ENCODE measurements at regions of chr11 and their contacts with region 1.

Region 1: GRCh38 chr11:94623120-94623735 is 56.1 kb downstream of the PIWIL4 start:
- DNase-seq: peak; percentile 35
- H3K4me3 ChIP-seq: no peak overlapping the region
- H3K27ac ChIP-seq: no peak overlapping the region
- H3K4me1 ChIP-seq: no peaks in the 10 kb centered on the region
- H3K27me3 ChIP-seq: no peaks in the 10 kb centered on the region
- CTCF ChIP-seq: peak; percentile 53

Region 2: GRCh38 chr11:94762208-94762607 is 139.0 kb after region 1 on chr11:
- intact Hi-C with region 1: loop called (anchors 5 kb)
- DNase-seq: no peak
- H3K4me3 ChIP-seq: no peak overlapping the region
- H3K27ac ChIP-seq: no peak overlapping the region
- H3K4me1 ChIP-seq: no peaks in the 10 kb centered on the region
- H3K27me3 ChIP-seq: peaks cover 2% of the 10 kb centered on the region
- CTCF ChIP-seq: no peak

Region 3: DNA sequence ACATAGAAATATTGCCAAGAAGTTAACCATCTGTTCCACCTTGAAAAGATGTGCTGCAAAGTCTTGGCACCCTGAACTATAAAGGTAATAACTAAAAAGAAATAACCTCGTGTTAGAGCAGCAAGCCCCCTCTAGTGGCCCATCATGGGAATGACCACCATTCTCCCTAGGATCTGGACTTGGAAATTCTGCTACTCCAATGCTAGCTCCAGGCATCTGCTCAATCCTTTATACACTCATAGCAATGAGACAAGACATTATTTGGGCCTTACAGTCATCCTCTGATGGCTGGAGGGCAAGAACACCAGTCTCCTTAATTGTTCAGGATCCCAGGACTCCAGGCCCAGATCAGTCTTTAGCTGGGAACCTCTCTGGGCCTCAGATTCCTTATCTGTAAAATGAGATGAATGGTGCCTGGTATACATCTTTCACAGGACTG is 274.1 kb after region 1 on chr11:
- intact Hi-C with region 1: loop called (anchors 2 kb)
- DNase-seq: peak; percentile 42
- H3K4me3 ChIP-seq: no peak overlapping the region
- H3K27ac ChIP-seq: no peak overlapping the region
- H3K4me1 ChIP-seq: no peaks in the 10 kb centered on the region
- H3K27me3 ChIP-seq: no peaks in the 10 kb centered on the region
- CTCF ChIP-seq: peak; percentile 88

Measured in colonic mucosa (tissue), 4 donors.